GM10248 (cell line): ENCODE measurements at regions of chr16 and their contacts with region 1.

Region 1: DNA sequence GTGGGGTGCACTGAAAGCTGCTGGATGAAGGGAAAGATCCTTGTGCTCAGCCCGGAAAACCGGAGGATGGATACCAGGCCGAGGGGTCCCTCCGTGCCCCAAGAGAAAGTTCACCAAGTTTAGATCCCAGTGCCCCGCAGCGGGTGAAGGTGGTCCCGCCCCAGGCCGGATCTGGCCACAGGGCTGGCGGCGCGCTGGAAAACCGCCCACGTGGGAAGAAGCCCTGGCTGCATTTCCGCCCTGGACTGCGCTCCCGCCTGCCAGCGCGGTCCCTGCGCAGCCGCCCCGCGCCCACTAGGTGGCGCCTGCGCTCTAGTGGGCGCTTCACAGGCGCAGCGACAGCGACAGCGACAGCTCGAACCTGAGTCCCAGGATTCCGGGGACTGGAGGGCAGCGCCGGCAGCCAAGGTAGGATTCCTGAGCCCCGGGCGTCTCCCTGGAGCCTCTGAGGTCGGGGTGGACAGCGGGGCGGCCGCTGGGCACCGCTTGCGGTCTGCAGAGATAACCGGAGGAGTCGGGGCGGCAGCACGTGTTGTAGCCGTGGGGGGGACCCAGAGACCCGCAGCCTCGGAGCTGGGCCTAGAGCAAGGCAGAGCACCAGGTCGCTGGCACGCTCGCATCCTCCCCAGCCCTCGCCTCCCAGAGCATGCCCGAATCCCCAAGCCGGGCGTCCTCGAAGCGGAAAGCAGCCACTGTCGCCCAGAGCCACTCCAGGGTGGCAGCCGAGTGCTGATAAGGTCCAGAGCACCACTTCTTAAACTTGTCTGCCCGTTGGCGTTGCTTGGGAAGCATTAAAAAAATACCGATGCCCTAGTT is at the start of gene CHD9:
- DNase-seq: peak; percentile 90
- CTCF ChIP-seq: peak; percentile 99

Region 2: DNA sequence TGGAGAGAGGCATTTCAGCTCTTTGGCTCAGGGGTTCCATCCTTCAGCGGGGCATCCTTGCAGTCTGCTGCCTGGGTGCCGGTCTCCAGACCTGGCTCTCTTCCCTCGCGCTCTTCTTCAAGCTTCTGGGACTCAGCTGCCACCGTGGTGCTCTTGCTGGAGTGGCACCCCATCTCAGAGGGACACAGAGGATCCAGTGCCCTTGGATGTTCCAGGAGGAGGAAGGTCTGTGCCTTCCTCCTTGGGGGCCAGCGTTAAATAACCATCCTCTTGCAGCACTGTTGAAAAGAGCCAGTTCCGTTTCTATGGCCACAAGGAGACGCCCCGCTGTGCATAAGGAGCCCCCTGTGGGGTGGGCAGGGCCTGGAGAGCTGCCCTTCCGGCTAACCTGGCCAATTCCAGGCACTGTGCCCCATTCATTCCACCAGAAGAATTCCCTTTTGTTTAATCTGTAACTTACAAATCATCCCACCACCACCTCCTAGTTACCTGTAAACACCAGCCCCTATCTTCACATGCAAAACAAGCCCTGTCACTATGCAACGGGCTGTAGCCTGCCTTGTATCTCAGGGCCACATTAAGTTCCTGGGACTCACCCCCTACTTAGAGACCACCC is 10.8 kb before region 1 on chr16:
- CTCF ChIA-PET with region 1: interaction called, 25 read pairs
- POLR2A ChIA-PET with region 1: interaction called, 3 read pairs
- DNase-seq: no peak
- CTCF ChIP-seq: no peak

Region 3: DNA sequence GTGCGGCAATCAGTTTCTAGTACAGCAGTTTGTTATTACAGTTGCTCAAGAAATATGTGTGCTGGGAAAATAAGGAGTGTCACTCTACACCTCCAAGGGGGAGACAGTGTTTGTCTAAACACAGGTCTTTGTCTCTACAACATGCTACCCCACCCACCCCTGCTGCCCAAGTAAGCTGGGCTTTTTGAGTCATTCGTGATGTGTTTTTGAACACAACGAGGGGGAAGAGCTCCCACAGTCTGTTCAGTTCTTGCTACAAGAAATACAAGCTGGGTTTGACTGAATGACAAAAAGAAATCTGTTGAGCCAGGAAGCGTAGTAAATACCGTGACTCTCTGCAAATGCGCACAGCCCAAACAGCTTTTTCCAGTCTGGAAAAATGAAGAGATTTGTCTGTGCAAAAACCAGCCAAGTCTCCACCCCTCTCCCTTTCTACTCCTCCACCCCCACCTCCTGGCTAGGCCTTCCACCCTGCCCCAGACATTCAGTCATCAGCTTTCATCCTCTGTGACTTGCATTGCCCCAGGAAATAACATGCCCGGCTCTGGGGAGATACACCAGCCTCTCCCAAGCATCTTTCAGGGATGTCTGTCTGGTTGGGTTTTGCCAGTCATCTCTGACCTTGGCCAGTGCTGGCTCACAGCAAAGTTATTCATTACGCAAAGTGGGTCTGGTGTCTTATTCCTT is 25.6 kb after region 1 on chr16:
- CTCF ChIA-PET with region 1: interaction called, 12 read pairs
- POLR2A ChIA-PET with region 1: no interaction called
- DNase-seq: no peak
- CTCF ChIP-seq: no peak

Region 4: DNA sequence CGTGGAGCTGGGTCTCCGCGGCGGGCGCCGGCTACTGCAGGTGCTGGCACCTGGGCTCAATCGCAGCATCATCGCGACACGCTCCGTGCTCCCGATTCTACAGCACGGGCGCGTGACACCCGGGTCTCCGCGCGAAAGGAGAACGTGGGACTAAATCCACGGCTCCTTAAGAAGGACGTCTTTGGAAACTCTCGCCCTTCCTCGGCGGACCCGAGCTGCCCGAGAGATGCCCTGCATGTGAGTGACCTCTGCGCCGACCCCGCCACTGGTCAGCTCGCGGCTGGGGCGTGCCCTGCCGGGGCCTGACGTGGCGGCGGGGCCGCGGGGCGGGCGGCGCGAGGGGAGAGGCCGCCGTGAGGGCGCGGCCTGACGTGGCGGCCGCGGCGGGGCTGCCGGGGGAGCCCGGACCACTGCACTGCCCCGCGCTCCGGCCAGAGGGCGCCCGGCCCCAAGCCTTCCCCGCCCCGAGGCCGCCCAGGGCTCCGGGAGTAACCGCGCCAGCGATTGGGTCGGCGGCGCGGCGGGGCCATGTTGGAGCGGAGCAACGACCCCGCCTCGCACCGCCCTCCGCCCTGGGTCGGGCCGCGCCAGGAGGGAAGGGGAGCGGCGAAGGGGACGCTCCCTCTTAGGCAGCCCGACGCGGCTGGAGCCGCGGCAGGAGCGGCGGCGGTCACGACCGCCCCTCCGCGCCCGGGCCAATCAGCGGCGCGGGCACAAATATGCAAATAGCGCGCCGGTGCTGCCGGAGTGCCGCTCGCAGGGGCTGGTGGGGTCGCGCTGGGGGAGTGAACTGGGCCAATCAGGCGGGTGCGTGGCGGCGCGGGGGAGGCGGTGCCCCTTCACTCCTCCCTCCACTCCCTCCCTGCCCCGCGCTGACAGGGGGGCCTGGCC is 75.5 kb after region 1 on chr16:
- CTCF ChIA-PET with region 1: interaction called, 10 read pairs
- POLR2A ChIA-PET with region 1: no interaction called
- DNase-seq: peak; percentile 96
- CTCF ChIP-seq: peak; percentile 74

Region 5: GRCh38 chr16:53207810-53208752 is 153.2 kb after region 1 on chr16:
- CTCF ChIA-PET with region 1: interaction called, 33 read pairs
- POLR2A ChIA-PET with region 1: no interaction called
- DNase-seq: peak; percentile 81
- CTCF ChIP-seq: peak; percentile 52